Transverse colon (tissue), 4 donors: ENCODE measurements at regions of chr6 and their contacts with region 1.

Region 1: GRCh38 chr6:151240036-151240685 is 394 bp downstream of the AKAP12 start:
- DNase-seq: peak; percentile 72
- H3K4me3 ChIP-seq: peak overlapping the region; percentile 58 to 91 (median 72)
- H3K27ac ChIP-seq: peak overlapping the region; percentile 85 to 97 (median 93)
- H3K4me1 ChIP-seq: peaks cover 0 to 8% (median 3%) of the 10 kb centered on the region in 4 donors
- H3K27me3 ChIP-seq: peaks cover 53% of the 10 kb centered on the region
- CTCF ChIP-seq: no peak
- EP300 ChIP-seq: no peak
- POLR2A ChIP-seq: peak; percentile 74

Region 2: GRCh38 chr6:150999107-150999506 is 241.1 kb before region 1 on chr6:
- in situ Hi-C with region 1: no loop called
- intact Hi-C with region 1: no loop called
- DNase-seq: no peak
- H3K4me3 ChIP-seq: no peak overlapping the region
- H3K27ac ChIP-seq: no peak overlapping the region
- H3K4me1 ChIP-seq: peaks cover 0 to 9% (median 2%) of the 10 kb centered on the region in 4 donors
- H3K27me3 ChIP-seq: no peaks in the 10 kb centered on the region
- CTCF ChIP-seq: no peak
- EP300 ChIP-seq: no peak
- POLR2A ChIP-seq: no peak

Region 3: GRCh38 chr6:151014404-151015100 is 225.6 kb before region 1 on chr6:
- in situ Hi-C with region 1: no loop called
- intact Hi-C with region 1: loop called (anchors 10 kb)
- DNase-seq: peak; percentile 78
- H3K4me3 ChIP-seq: no peak overlapping the region
- H3K27ac ChIP-seq: peak overlapping the region in 3 of 4 donors; percentile 4 to 45 (median 5)
- H3K4me1 ChIP-seq: peaks cover 0 to 5% (median 2%) of the 10 kb centered on the region in 4 donors
- H3K27me3 ChIP-seq: no peaks in the 10 kb centered on the region
- CTCF ChIP-seq: peak; percentile 96 to 99 (median 98)
- EP300 ChIP-seq: no peak
- POLR2A ChIP-seq: no peak

Region 4: GRCh38 chr6:151044465-151045441 is 195.4 kb before region 1 on chr6:
- in situ Hi-C with region 1: no loop called
- intact Hi-C with region 1: loop called (anchors 10 kb)
- DNase-seq: peak; percentile 87
- H3K4me3 ChIP-seq: peak overlapping the region in 3 of 4 donors; percentile 4 to 33 (median 11)
- H3K27ac ChIP-seq: peak overlapping the region; percentile 78 to 86 (median 82)
- H3K4me1 ChIP-seq: peaks cover 0 to 25% (median 18%) of the 10 kb centered on the region in 4 donors
- H3K27me3 ChIP-seq: no peaks in the 10 kb centered on the region
- CTCF ChIP-seq: no peak
- EP300 ChIP-seq: peak; percentile 41
- POLR2A ChIP-seq: peak; percentile 40

Region 5: GRCh38 chr6:151209071-151209831 is 30.9 kb before region 1 on chr6:
- in situ Hi-C with region 1: no loop called
- intact Hi-C with region 1: no loop called
- DNase-seq: no peak
- H3K4me3 ChIP-seq: no peak overlapping the region
- H3K27ac ChIP-seq: no peak overlapping the region
- H3K4me1 ChIP-seq: peaks cover 0 to 4% (median 0%) of the 10 kb centered on the region in 4 donors
- H3K27me3 ChIP-seq: no peaks in the 10 kb centered on the region
- CTCF ChIP-seq: no peak
- EP300 ChIP-seq: no peak
- POLR2A ChIP-seq: no peak

Region 6: GRCh38 chr6:151294561-151295101 is 54.5 kb after region 1 on chr6:
- in situ Hi-C with region 1: no loop called
- intact Hi-C with region 1: loop called (anchors 2 kb)
- DNase-seq: no peak
- H3K4me3 ChIP-seq: no peak overlapping the region
- H3K27ac ChIP-seq: peak overlapping the region; percentile 78 to 89 (median 84)
- H3K4me1 ChIP-seq: peaks cover 12 to 51% (median 14%) of the 10 kb centered on the region in 4 donors
- H3K27me3 ChIP-seq: no peaks in the 10 kb centered on the region
- CTCF ChIP-seq: no peak
- EP300 ChIP-seq: no peak
- POLR2A ChIP-seq: no peak

Region 7: GRCh38 chr6:151323791-151324487 is 83.8 kb after region 1 on chr6:
- in situ Hi-C with region 1: no loop called
- intact Hi-C with region 1: loop called (anchors 5 kb)
- DNase-seq: peak; percentile 83
- H3K4me3 ChIP-seq: no peak overlapping the region
- H3K27ac ChIP-seq: peak overlapping the region; percentile 68 to 85 (median 74)
- H3K4me1 ChIP-seq: peaks cover 11 to 22% (median 20%) of the 10 kb centered on the region in 4 donors
- H3K27me3 ChIP-seq: peaks cover 26% of the 10 kb centered on the region
- CTCF ChIP-seq: peak; percentile 96 to 98 (median 97)
- EP300 ChIP-seq: peak; percentile 87
- POLR2A ChIP-seq: no peak